MCF 10A (cell line): ENCODE measurements at regions of chr5 and their contacts with region 1.

Region 1: DNA sequence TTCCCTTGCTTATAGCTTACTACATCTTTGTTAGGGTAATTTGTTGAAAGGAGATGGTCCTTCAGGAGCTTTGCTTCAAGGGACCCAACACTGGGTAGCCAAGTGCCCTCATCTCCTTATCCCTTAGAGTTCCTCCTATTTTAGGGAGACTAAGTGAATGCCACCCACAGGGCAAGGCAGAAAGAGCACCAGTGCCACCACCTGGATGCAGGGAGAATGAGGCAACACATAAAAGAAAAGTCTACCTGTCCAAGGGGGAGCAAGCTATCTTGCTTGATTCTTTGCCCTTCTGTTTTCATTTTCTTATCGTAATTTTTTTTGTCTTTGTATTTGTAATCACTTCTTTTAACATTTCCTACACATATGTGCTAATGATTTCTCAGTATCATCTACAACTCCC is 205.5 kb downstream of the NPR3 start:
- DNase-seq: peak; percentile 66
- H3K4me3 Mint-ChIP-seq: no peak overlapping the region
- H3K27ac Mint-ChIP-seq: no peak overlapping the region
- H3K4me1 Mint-ChIP-seq: no peaks in the 10 kb centered on the region
- H3K27me3 Mint-ChIP-seq: no peaks in the 10 kb centered on the region
- CTCF ChIP-seq: peak; percentile 64

Region 2: DNA sequence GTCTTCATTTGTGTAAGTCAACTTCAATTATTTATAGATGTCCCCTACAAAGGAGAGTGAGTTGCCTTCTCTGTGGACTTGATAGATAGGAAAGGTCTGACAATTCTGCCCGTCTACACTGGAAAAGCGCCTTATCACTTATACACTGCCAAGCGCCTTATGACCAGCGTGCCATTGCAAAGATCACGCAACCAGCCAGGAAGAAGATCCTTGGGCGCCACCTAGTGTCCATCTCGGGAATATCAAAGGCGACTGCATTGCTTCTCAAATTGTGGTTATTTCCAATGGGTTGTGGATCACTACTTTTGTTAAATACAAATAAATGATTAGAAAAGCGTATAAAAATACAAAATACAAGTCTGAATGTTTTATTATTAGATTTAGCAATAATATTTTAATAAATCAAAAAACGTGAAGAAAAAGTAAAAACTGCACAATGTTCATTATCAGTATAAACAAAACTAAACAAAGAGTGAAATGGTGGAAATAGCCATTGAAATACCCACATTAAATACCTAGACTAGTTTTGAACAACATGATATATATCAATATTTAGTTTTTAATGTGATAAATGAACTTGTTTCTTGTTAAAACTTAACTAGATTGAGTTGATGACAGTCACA is 303.5 kb before region 1 on chr5:
- CTCF ChIA-PET with region 1: interaction called, 4 read pairs
- POLR2A ChIA-PET with region 1: no interaction called
- intact Hi-C with region 1: loop called (anchors 1 kb)
- DNase-seq: peak; percentile 84
- H3K4me3 Mint-ChIP-seq: no peak overlapping the region
- H3K27ac Mint-ChIP-seq: no peak overlapping the region
- H3K4me1 Mint-ChIP-seq: peaks cover 9% of the 10 kb centered on the region
- H3K27me3 Mint-ChIP-seq: no peaks in the 10 kb centered on the region
- CTCF ChIP-seq: peak; percentile 84

Region 3: DNA sequence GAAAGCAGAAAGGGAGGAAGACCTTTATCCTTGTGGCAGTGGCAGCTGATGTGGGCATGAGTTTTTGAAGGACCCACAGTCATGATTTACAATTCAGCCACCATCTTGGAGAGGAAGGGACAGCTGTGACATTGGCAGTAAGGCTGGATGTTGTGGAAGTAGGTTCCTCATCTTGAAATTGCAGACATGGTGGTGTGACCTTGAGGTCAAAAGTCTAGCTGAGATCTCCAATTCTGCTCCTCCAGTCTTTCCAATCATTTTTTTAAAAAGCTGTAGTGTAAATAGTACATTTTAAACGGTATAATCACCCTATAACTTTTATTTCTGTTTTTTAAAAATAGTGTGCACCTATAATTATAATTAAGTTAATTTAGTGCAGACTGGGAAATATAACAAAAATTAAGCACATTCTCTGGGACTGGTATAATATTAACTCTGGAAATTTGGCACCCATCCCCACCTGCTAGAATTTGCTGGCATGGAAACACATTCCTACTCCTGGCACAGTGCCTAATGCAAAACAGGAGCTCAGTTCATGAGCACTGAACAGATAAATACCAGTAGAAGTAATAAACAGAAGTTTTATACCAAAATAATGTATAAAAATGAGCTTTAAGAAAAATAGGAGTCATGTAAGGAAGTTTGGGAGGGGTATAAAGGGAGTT is 229.3 kb before region 1 on chr5:
- CTCF ChIA-PET with region 1: interaction called, 10 read pairs
- POLR2A ChIA-PET with region 1: no interaction called
- intact Hi-C with region 1: no loop called
- DNase-seq: peak; percentile 62
- H3K4me3 Mint-ChIP-seq: no peak overlapping the region
- H3K27ac Mint-ChIP-seq: no peak overlapping the region
- H3K4me1 Mint-ChIP-seq: peaks cover 24% of the 10 kb centered on the region
- H3K27me3 Mint-ChIP-seq: no peaks in the 10 kb centered on the region
- CTCF ChIP-seq: no peak

Region 4: DNA sequence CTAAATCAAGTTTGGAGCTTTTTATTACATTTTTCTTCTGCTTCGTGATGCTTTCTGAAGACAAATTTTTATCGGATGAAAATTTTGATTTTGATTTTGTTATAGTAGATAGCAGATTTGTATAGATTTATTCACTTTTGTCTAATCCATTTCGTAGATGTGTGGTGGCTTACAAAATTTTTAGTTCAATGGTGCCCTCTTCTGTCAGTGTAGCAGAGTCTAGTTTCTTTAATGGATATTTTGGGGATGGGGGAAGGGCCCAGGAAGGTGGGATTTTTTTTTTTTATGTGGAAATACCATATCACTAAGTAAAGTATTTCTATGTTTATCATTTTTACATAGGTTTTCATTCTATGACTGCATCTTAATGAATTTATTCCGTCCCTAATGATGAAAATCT is 264.3 kb after region 1 on chr5:
- CTCF ChIA-PET with region 1: interaction called, 6 read pairs
- POLR2A ChIA-PET with region 1: interaction called, 3 read pairs
- intact Hi-C with region 1: loop called (anchors 1 kb)
- DNase-seq: peak; percentile 56
- H3K4me3 Mint-ChIP-seq: no peak overlapping the region
- H3K27ac Mint-ChIP-seq: peak overlapping the region; percentile 31
- H3K4me1 Mint-ChIP-seq: no peaks in the 10 kb centered on the region
- H3K27me3 Mint-ChIP-seq: no peaks in the 10 kb centered on the region
- CTCF ChIP-seq: peak; percentile 68

Region 5: GRCh38 chr5:33423018-33423630 is 506.5 kb after region 1 on chr5:
- CTCF ChIA-PET with region 1: interaction called, 9 read pairs
- POLR2A ChIA-PET with region 1: no interaction called
- intact Hi-C with region 1: loop called (anchors 10 kb)
- DNase-seq: peak; percentile 49
- H3K4me3 Mint-ChIP-seq: no peak overlapping the region
- H3K27ac Mint-ChIP-seq: no peak overlapping the region
- H3K4me1 Mint-ChIP-seq: no peaks in the 10 kb centered on the region
- H3K27me3 Mint-ChIP-seq: no peaks in the 10 kb centered on the region
- CTCF ChIP-seq: peak; percentile 62